ENCODE measurements at regions of chrX and their contacts with region 1.

Region 1: DNA sequence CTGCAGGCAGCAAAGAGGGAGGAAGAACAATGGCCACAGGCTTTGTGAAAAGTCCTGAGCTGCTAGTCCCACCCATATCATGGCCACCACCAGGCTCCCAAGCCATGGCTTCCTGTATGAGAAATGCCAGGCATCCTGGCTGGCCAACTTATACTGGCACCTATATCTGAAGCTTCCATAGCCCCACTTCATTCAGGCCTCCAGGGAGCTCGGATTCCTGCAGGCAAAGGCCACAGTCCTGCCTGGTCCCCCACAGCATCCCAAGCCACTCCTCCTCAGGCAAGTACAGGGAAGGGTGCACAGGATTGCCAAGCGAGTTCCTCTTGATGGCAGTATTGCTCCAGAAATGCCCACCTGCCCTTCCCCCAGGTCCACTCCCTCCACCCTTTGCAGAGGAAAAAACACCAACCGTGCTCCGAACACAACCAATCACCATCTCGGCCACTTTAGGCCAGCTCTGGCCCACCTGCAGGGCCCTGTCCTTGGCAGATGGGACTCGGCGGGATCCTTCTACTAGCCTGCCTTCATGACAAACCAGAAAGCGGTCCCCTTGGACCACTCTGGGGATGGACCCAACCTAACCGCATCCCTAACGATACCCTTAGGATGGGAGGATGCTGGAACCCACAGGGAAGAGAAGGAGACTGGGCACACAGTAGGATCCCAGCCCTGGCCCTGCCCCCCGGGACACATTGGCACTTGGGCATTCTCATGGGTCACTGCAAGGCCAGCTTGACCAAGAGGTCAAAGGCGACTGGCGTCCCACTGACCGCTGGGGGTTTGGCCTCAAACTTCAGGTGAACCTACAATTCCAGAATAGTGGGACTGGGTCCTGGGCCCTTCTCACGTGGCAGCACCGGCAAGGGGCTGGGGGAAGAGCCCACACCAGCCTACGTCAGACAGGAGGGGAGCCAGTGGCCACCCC is 220.4 kb upstream of the AGTR2 start:
- DNase-seq: no peak
- ATAC-seq: peak; percentile 29; the same call in 2 of the 3 replicates
- H3K4me3 ChIP-seq: no peak overlapping the region
- H3K27ac ChIP-seq: no peak overlapping the region
- H3K4me1 ChIP-seq: no peaks in the 10 kb centered on the region
- H3K27me3 ChIP-seq: no peaks in the 10 kb centered on the region
- CTCF ChIP-seq: peak in 2 of 3 experiments; percentile 31 to 41; a peak in 3 of 6 replicates
- EP300 ChIP-seq: no peak
- POLR2A ChIP-seq: no peak
- RAD21 ChIP-seq: peak; percentile 69

Region 2: GRCh38 chrX:115650916-115651315 is 299.2 kb before region 1 on chrX:
- CTCF ChIA-PET with region 1: interaction called, 12 read pairs
- POLR2A ChIA-PET with region 1: no interaction called
- RAD21 ChIA-PET with region 1: no interaction called
- SMC1A ChIA-PET with region 1: no interaction called
- in situ Hi-C with region 1: loop called (anchors 10 kb)
- intact Hi-C with region 1: loop called (anchors 1 kb)
- DNase-seq: peak; percentile 17
- ATAC-seq: peak; percentile 84
- H3K4me3 ChIP-seq: no peak overlapping the region
- H3K27ac ChIP-seq: no peak overlapping the region
- H3K4me1 ChIP-seq: no peaks in the 10 kb centered on the region
- H3K27me3 ChIP-seq: no peaks in the 10 kb centered on the region
- CTCF ChIP-seq: peak; percentile 61 to 72 (median 68)
- EP300 ChIP-seq: no peak
- POLR2A ChIP-seq: no peak
- RAD21 ChIP-seq: peak; percentile 78

Region 3: GRCh38 chrX:115892787-115893671 is 57.1 kb before region 1 on chrX:
- CTCF ChIA-PET with region 1: interaction called, 3 read pairs
- POLR2A ChIA-PET with region 1: no interaction called
- RAD21 ChIA-PET with region 1: no interaction called
- SMC1A ChIA-PET with region 1: interaction called, 5 read pairs
- in situ Hi-C with region 1: no loop called
- intact Hi-C with region 1: loop called (anchors 1 kb)
- DNase-seq: peak; percentile 73
- ATAC-seq: peak; percentile 75
- H3K4me3 ChIP-seq: no peak overlapping the region
- H3K27ac ChIP-seq: peak overlapping the region; percentile 32; the same call in 1 of the 2 replicates
- H3K4me1 ChIP-seq: peaks cover 6% of the 10 kb centered on the region; the same call in 1 of the 2 replicates
- H3K27me3 ChIP-seq: no peaks in the 10 kb centered on the region
- CTCF ChIP-seq: peak; percentile 15 to 64 (median 52); a peak in 5 of 6 replicates
- EP300 ChIP-seq: no peak
- POLR2A ChIP-seq: no peak
- RAD21 ChIP-seq: peak; percentile 89

Region 4: GRCh38 chrX:115912372-115912897 is 37.7 kb before region 1 on chrX:
- CTCF ChIA-PET with region 1: interaction called, 4 read pairs
- POLR2A ChIA-PET with region 1: no interaction called
- RAD21 ChIA-PET with region 1: interaction called, 3 read pairs
- SMC1A ChIA-PET with region 1: interaction called, 5 read pairs
- in situ Hi-C with region 1: loop called (anchors 5 kb)
- intact Hi-C with region 1: no loop called
- DNase-seq: peak; percentile 57
- ATAC-seq: peak; percentile 96
- H3K4me3 ChIP-seq: no peak overlapping the region
- H3K27ac ChIP-seq: no peak overlapping the region
- H3K4me1 ChIP-seq: no peaks in the 10 kb centered on the region
- H3K27me3 ChIP-seq: no peaks in the 10 kb centered on the region
- CTCF ChIP-seq: peak; percentile 19 to 50 (median 49); a peak in 4 of 6 replicates
- EP300 ChIP-seq: peak; percentile 56 to 59; a peak in 2 of 4 replicates
- POLR2A ChIP-seq: no peak
- RAD21 ChIP-seq: peak; percentile 51

Region 5: GRCh38 chrX:115978068-115978467 is 27.9 kb after region 1 on chrX:
- CTCF ChIA-PET with region 1: no interaction called
- POLR2A ChIA-PET with region 1: no interaction called
- RAD21 ChIA-PET with region 1: no interaction called
- SMC1A ChIA-PET with region 1: no interaction called
- in situ Hi-C with region 1: no loop called
- intact Hi-C with region 1: no loop called
- DNase-seq: no peak
- ATAC-seq: no peak
- H3K4me3 ChIP-seq: no peak overlapping the region
- H3K27ac ChIP-seq: no peak overlapping the region
- H3K4me1 ChIP-seq: no peaks in the 10 kb centered on the region
- H3K27me3 ChIP-seq: no peaks in the 10 kb centered on the region
- CTCF ChIP-seq: no peak
- EP300 ChIP-seq: no peak
- POLR2A ChIP-seq: no peak
- RAD21 ChIP-seq: no peak

Measured in GM12878 (cell line).